SK-N-SH (cell line): ENCODE measurements at regions of chr1 and their contacts with region 1.

Region 1: GRCh38 chr1:41282679-41283317 is 40.7 kb upstream of the SCMH1 start:
- DNase-seq: peak; percentile 78
- H3K4me3 ChIP-seq: no peak overlapping the region; a peak in 1 of 4 replicates
- H3K27ac ChIP-seq: no peak overlapping the region
- H3K4me1 ChIP-seq: peaks cover 0 to 2% of the 10 kb centered on the region in 2 experiments; a peak in 1 of 4 replicates
- H3K27me3 ChIP-seq: no peaks in the 10 kb centered on the region; the same call in 1 of the 2 replicates
- CTCF ChIP-seq: peak; percentile 94
- EP300 ChIP-seq: no peak
- RAD21 ChIP-seq: peak; percentile 83

Region 2: DNA sequence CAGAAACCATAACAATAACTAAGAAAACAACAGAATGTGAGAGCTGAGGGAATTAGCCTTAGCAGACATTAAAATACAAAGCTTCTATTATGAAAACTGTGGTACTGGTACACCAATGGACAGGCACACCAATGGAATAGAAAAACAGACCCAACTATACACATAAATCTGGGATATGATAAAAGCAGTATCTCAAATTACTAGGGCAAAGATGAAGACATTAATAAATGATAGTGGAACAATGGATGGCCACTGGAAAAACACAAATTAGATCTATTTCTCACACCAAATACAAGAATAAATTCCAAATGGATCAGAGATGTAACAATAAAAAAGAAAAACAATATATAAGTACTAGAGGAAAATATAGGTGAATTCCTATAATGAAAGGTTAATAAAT is 195.9 kb before region 1 on chr1:
- CTCF ChIA-PET with region 1: no interaction called
- POLR2A ChIA-PET with region 1: no interaction called
- DNase-seq: no peak
- H3K4me3 ChIP-seq: no peak overlapping the region
- H3K27ac ChIP-seq: no peak overlapping the region
- H3K4me1 ChIP-seq: no peaks in the 10 kb centered on the region
- H3K27me3 ChIP-seq: no peaks in the 10 kb centered on the region
- CTCF ChIP-seq: no peak
- EP300 ChIP-seq: no peak
- RAD21 ChIP-seq: no peak

Region 3: GRCh38 chr1:41192456-41193178 is 90.2 kb before region 1 on chr1:
- CTCF ChIA-PET with region 1: no interaction called
- POLR2A ChIA-PET with region 1: no interaction called
- DNase-seq: no peak
- H3K4me3 ChIP-seq: no peak overlapping the region
- H3K27ac ChIP-seq: no peak overlapping the region
- H3K4me1 ChIP-seq: peaks cover 0 to 3% of the 10 kb centered on the region in 2 experiments; a peak in 2 of 4 replicates
- H3K27me3 ChIP-seq: no peaks in the 10 kb centered on the region
- CTCF ChIP-seq: no peak
- EP300 ChIP-seq: no peak
- RAD21 ChIP-seq: no peak

Region 4: GRCh38 chr1:41268154-41268770 is 14.5 kb before region 1 on chr1:
- CTCF ChIA-PET with region 1: interaction called, 35 read pairs
- POLR2A ChIA-PET with region 1: interaction called, 4 read pairs
- DNase-seq: peak; percentile 86
- H3K4me3 ChIP-seq: no peak overlapping the region
- H3K27ac ChIP-seq: no peak overlapping the region
- H3K4me1 ChIP-seq: peaks cover 0 to 12% of the 10 kb centered on the region in 2 experiments; a peak in 1 of 4 replicates
- H3K27me3 ChIP-seq: no peaks in the 10 kb centered on the region
- CTCF ChIP-seq: peak; percentile 88
- EP300 ChIP-seq: no peak
- RAD21 ChIP-seq: peak; percentile 99

Region 5: GRCh38 chr1:41305576-41306363 is 23.0 kb after region 1 on chr1:
- CTCF ChIA-PET with region 1: interaction called, 21 read pairs
- POLR2A ChIA-PET with region 1: no interaction called
- DNase-seq: no peak
- H3K4me3 ChIP-seq: no peak overlapping the region
- H3K27ac ChIP-seq: no peak overlapping the region
- H3K4me1 ChIP-seq: peaks cover 0 to 5% of the 10 kb centered on the region in 2 experiments; a peak in 1 of 4 replicates
- H3K27me3 ChIP-seq: 0 out of 2 replicates have a peak, but pooled peaks cover 4% of the 10 kb centered on the region
- CTCF ChIP-seq: no peak
- EP300 ChIP-seq: no peak
- RAD21 ChIP-seq: no peak

Region 6: GRCh38 chr1:41360993-41361753 is 78.4 kb after region 1 on chr1 and contains the start of gene FOXO6:
- CTCF ChIA-PET with region 1: interaction called, 55 read pairs
- POLR2A ChIA-PET with region 1: no interaction called
- DNase-seq: peak; percentile 99
- H3K4me3 ChIP-seq: peak within 1 kb of the TSS; percentile 64 to 66
- H3K27ac ChIP-seq: peak within 1 kb of the TSS in 1 of 2 experiments; percentile 53; a peak in 1 of 4 replicates
- H3K4me1 ChIP-seq: peaks cover 33 to 68% of the 10 kb centered on the region in 2 experiments; a peak in 3 of 4 replicates
- H3K27me3 ChIP-seq: no peaks in the 10 kb centered on the region
- CTCF ChIP-seq: peak; percentile 38
- EP300 ChIP-seq: no peak
- RAD21 ChIP-seq: peak; percentile 42
- polyA plus RNA-seq, gene FOXO6: 0.11 and 0.35 TPM in 2 replicates

Region 7: GRCh38 chr1:41416552-41417334 is 133.9 kb after region 1 on chr1:
- CTCF ChIA-PET with region 1: interaction called, 174 read pairs
- POLR2A ChIA-PET with region 1: no interaction called
- DNase-seq: peak; percentile 90
- H3K4me3 ChIP-seq: no peak overlapping the region; a peak in 1 of 4 replicates
- H3K27ac ChIP-seq: no peak overlapping the region
- H3K4me1 ChIP-seq: peaks cover 12 to 45% of the 10 kb centered on the region in 2 experiments; a peak in 3 of 4 replicates
- H3K27me3 ChIP-seq: no peaks in the 10 kb centered on the region
- CTCF ChIP-seq: peak; percentile 94
- EP300 ChIP-seq: no peak
- RAD21 ChIP-seq: peak; percentile 97